Left lung (tissue), 14 donors: ENCODE measurements at regions of chr5 and their contacts with region 1.

Region 1: DNA sequence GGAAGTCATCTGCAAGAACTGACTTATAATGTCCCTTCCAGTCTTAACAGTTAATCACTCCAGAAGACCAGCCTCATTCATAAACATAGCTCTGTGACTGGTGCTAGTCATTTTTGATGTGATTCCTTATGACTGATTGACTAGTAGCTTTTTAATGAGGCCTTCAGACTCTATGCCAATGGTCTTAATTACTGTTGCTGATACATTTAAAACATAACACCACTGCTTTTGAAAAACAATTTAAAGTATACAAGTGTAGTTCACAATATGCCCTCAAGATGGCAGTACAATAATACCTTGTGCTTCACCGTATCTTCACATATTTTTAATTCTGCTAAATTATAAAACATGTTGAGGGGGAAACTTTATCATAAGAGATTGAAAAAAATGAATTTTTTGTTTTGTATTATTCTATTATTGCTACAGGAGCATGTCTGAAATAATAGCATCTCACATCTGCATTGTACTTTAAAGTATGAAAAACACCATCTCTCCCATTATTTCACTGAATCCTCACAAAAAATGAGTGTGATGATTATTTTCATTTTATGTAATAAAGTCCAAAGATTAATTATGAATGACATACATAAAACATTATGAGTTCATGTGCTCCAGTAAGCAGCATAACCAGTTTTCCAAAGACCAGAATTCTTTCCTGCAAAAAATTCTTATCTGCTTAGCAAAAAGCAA is 55.2 kb upstream of the SHISAL2B start:
- DNase-seq: peak in 2 of 4 donors; percentile 46 to 56
- ATAC-seq: peak; percentile 61
- H3K4me3 ChIP-seq: no peak overlapping the region
- H3K27ac ChIP-seq: no peak overlapping the region
- H3K4me1 ChIP-seq: peaks cover 0 to 4% of the 10 kb centered on the region in 2 donors
- H3K27me3 ChIP-seq: no peaks in the 10 kb centered on the region
- CTCF ChIP-seq: peak; percentile 65 to 87

Region 2: DNA sequence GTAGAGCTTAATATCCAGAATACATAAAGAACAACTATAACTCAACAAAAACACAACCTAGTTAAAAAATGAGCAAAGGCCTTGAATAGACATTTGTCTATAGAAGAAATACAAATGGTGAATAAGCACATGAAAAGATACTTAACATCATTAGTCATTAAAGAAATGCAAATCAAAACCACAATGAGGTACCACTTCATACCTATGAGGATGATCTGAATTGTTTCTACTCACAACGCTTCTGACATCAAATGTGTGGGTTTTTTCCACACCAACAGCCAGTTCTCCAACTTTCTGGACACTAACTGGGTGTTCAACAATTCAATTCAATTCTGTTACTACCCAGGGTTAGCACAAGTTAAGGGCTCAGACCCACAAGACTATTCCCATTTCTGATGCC is 111.3 kb after region 1 on chr5:
- intact Hi-C with region 1: no loop called
- DNase-seq: no peak
- ATAC-seq: no peak
- H3K4me3 ChIP-seq: no peak overlapping the region
- H3K27ac ChIP-seq: no peak overlapping the region
- H3K4me1 ChIP-seq: no peaks in the 10 kb centered on the region
- H3K27me3 ChIP-seq: no peaks in the 10 kb centered on the region
- CTCF ChIP-seq: no peak

Region 3: DNA sequence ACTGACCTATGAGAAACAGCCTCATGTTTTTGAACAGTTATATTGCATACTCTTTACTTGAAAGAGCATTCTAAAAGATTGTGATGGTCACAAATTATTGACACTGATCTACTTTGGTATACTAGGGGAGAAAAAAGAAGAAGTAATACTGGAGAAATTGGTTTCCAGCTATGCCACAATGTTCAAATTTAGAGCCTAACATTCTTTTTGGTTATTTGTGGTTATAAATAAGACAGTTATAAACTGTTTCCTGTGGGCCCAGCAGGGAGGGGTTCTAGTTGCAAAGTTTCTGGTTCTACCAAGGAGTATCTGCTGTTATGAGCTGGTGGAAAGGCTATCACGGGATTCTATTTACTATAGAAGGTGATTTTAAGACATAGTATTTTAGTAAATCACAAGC is 138.4 kb after region 1 on chr5:
- intact Hi-C with region 1: loop called in 1 of 2 experiments (anchors 10 kb)
- DNase-seq: no peak
- ATAC-seq: no peak
- H3K4me3 ChIP-seq: no peak overlapping the region
- H3K27ac ChIP-seq: no peak overlapping the region
- H3K4me1 ChIP-seq: peaks cover 9 to 31% of the 10 kb centered on the region in 2 donors
- H3K27me3 ChIP-seq: no peaks in the 10 kb centered on the region
- CTCF ChIP-seq: no peak